Astrocyte of the cerebellum (primary cell): ENCODE measurements at regions of chr11 and their contacts with region 1.

Region 1: GRCh38 chr11:17770048-17770652 is 35.6 kb downstream of the KCNC1 start:
- DNase-seq: no peak
- H3K4me3 ChIP-seq: no peak overlapping the region
- CTCF ChIP-seq: no peak

Region 2: DNA sequence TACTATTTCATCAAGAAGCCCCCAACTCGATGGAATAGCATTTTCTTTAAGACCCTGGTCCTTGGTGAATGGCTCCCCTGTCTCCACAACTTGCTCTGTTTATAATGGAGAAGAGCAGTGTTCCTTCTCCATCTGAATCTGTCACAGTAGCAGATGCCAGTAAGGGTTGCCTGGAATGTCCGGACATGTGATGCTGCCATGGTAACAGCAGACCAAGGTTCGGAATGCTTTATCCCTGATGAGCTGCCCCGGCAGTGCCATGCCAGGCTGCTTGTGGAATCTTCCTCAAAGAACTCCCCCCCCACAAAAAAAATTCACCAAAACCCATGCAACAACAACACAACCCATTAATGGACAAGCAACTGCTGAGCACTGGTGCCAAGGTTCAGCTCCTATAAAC is 36.9 kb after region 1 on chr11:
- in situ Hi-C with region 1: loop called (anchors 5 kb)
- DNase-seq: no peak
- H3K4me3 ChIP-seq: no peak overlapping the region
- CTCF ChIP-seq: no peak